Posterior vena cava (tissue), 2 donors: ENCODE measurements at regions of chr7 and their contacts with region 1.

Region 1: DNA sequence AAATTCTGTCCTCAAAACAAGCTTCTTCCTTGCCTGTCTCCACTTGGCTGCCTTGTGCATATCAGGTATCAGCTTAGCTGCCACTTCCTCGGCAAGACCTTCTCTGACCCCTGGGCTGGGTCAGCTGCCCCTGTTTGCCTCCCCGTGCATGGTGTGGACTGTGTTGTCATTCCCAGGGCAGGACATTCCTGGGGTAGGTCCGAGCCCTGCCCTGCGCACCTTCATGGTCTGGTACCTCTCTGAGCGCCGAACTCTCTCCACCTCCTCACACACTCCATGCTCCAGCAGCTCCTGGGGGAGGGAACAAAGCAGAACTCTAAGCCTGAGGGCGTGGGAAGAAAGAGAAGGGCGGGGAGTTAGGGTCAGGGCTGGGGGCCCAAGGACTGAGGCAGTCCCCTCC is 3.8 kb downstream of the POLM start:
- DNase-seq: peak; percentile 41

Region 2: GRCh38 chr7:44059219-44060090 is 19.1 kb before region 1 on chr7:
- intact Hi-C with region 1: no loop called
- DNase-seq: peak; percentile 60

Region 3: GRCh38 chr7:44112231-44113000 is 33.9 kb after region 1 on chr7:
- intact Hi-C with region 1: loop called (anchors 5 kb)
- DNase-seq: peak; percentile 86

Region 4: DNA sequence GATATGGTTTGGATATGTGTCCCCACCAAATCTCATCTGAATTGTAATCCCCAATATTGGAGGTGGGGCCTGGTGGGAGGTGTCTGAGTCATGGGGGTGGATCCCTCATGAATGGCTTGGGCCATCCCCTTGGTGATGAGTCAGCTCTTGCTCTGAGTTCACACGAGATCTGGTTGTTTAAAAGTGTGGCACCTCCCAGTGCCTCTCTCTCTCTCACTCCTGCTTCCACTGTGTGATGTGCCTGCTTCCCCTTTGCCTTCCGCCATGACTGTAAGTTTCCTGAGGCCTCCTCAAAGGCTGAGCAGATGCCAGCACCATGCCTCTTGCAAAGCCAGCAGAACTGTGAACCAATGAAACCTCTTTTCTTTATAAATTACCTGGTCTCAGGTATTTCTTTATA is 115.5 kb after region 1 on chr7:
- intact Hi-C with region 1: loop called in 1 of 2 experiments (anchors 5 kb)
- DNase-seq: no peak

Region 5: DNA sequence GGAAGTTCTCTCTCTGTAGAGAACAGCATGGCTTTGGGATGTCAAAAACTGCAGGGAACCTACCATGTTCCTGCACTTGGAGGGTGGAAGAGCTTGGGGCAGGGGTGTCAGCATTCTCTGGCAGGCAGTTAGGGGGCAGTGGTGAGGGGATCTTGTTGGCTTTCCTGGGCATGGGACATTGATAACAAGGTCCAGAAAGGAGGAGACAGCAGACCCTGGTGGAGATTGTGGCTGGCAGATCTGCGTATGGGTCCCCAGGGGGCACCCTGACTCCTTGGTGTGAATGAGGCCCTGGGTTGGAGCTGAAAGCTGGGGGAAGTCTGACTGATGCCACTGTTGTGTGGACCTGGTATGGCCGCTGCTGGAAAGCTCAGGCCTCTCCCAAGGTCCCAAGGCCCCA is 269.8 kb after region 1 on chr7:
- intact Hi-C with region 1: no loop called
- DNase-seq: no peak